A549 (cell line): ENCODE measurements at regions of chr3 and their contacts with region 1.

Region 1: DNA sequence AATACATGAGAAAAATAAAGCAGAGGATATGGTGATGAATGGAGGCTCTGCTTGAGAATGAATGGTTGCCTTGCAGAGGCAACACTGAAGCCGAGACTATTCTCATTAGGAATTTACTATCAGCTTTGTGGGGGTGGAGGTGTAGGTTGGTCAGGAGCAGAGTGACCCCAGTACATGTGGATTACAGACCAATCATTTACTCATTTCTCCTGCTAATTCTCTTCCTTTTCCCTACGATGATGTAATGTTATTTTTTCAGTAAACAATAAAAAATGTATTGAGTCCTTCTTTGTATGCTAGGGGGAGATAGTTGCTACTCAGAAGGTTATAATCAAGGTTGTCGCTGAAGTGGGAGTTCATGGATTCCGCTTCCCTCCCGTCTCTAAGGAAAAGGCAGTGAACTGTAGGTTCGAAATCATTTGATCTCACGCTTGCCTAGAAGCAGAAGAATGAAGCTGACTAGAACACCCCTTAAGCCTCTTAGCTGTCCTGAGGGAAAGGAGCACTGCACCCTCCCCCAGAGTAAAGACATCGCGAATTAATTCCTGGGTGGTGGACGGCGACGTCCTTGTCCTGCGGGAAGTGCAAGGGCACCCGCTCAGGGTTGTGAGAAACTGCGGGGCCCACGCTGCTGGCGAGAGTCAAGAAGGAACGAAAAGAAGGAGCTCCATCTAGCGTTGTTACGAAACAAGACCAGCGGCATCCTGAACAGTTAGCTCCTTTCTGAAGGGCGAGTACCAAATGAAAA is 213.2 kb upstream of the PFN2 start:
- DNase-seq: peak; percentile 60 to 83
- ATAC-seq: peak; percentile 98
- H3K4me3 ChIP-seq: peak overlapping the region; percentile 39
- H3K27ac ChIP-seq: peak overlapping the region; percentile 55 to 80
- H3K4me1 ChIP-seq: peaks cover 32% of the 10 kb centered on the region
- CTCF ChIP-seq: peak; percentile 89
- EP300 ChIP-seq: no peak
- POLR2A ChIP-seq: no peak
- RAD21 ChIP-seq: peak; percentile 93 to 95

Region 2: GRCh38 chr3:149765762-149766334 is 418.0 kb before region 1 on chr3:
- CTCF ChIA-PET with region 1: interaction called, 10 read pairs
- POLR2A ChIA-PET with region 1: no interaction called
- DNase-seq: peak in 1 of 2 experiments; percentile 48
- ATAC-seq: peak; percentile 55 to 81; a peak in 4 of 6 replicates
- H3K4me3 ChIP-seq: no peak overlapping the region
- H3K27ac ChIP-seq: no peak overlapping the region
- H3K4me1 ChIP-seq: 0 out of 3 replicates have a peak, but pooled peaks cover 2% of the 10 kb centered on the region
- CTCF ChIP-seq: peak; percentile 73
- EP300 ChIP-seq: no peak
- POLR2A ChIP-seq: no peak
- RAD21 ChIP-seq: peak; percentile 72 to 74

Region 3: GRCh38 chr3:149936812-149937233 is 247.0 kb before region 1 on chr3:
- CTCF ChIA-PET with region 1: interaction called, 12 read pairs
- POLR2A ChIA-PET with region 1: no interaction called
- DNase-seq: peak; percentile 33 to 56
- ATAC-seq: peak; percentile 90 to 94
- H3K4me3 ChIP-seq: no peak overlapping the region
- H3K27ac ChIP-seq: no peak overlapping the region
- H3K4me1 ChIP-seq: no peaks in the 10 kb centered on the region
- CTCF ChIP-seq: peak; percentile 80
- EP300 ChIP-seq: no peak
- POLR2A ChIP-seq: no peak
- RAD21 ChIP-seq: peak; percentile 80 to 90

Region 4: GRCh38 chr3:149969940-149970715 is 213.7 kb before region 1 on chr3:
- CTCF ChIA-PET with region 1: interaction called, 80 read pairs
- POLR2A ChIA-PET with region 1: interaction called, 43 read pairs
- DNase-seq: peak; percentile 29 to 88
- ATAC-seq: peak; percentile 60 to 73
- H3K4me3 ChIP-seq: peak overlapping the region; percentile 91
- H3K27ac ChIP-seq: peak overlapping the region; percentile 98 to 99
- H3K4me1 ChIP-seq: peaks cover 35% of the 10 kb centered on the region
- CTCF ChIP-seq: no peak
- EP300 ChIP-seq: no peak
- POLR2A ChIP-seq: no peak
- RAD21 ChIP-seq: no peak

Region 5: DNA sequence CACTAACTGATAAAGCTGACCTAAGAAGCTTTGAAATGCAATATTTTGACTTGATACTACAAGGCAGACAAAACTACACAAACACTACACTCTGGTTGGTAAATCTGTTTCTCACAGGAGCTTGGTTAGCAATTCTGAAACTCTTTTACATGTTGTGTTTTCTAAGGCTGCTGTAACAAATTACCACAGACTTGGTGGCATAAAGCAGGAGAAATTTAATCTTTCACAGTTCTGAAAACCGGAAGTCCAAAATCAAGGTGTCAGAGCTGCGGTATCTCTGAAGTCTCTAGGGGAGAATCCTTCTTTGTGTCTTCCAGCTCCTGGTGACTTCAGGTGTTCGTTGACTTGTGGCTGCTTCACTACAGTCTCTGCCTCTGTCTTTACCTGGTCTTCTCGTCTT is 200.2 kb before region 1 on chr3:
- CTCF ChIA-PET with region 1: interaction called, 10 read pairs
- POLR2A ChIA-PET with region 1: no interaction called
- DNase-seq: no peak
- ATAC-seq: no peak
- H3K4me3 ChIP-seq: no peak overlapping the region
- H3K27ac ChIP-seq: no peak overlapping the region
- H3K4me1 ChIP-seq: no peaks in the 10 kb centered on the region
- CTCF ChIP-seq: no peak
- EP300 ChIP-seq: no peak
- POLR2A ChIP-seq: no peak
- RAD21 ChIP-seq: no peak

Region 6: DNA sequence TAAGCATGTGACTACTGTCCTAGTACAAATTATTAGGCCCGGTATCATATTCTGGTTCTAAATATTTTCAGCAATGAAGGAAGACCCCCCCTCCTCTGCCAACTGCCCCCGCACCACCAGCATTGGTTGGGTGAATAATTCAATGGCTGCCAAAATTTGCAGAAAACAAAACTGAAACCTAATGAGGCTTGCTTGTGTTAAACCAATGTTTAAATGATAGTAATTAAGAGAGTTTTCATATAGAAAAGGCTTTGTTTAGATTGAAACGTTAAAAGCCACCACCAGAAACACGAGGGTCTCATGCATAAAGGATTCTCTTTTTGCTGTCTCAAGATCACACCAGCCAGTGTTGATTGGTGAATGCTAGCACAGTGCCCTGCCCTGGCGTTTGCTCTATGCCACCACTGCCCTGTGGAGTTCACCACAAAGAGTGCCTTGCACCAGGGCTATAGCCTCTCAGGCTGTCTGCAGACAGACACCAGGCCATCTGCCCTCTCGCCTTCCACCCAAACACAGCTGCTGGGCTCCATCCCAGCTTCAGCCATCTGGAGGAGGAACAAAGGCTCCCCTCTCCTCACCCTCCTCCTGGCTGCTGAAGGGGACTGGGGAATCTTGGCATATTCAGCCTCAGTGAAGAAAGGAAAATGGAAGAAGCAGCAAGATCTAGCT is 12.9 kb before region 1 on chr3:
- CTCF ChIA-PET with region 1: interaction called, 23 read pairs
- POLR2A ChIA-PET with region 1: no interaction called
- DNase-seq: no peak
- ATAC-seq: no peak
- H3K4me3 ChIP-seq: no peak overlapping the region
- H3K27ac ChIP-seq: no peak overlapping the region
- H3K4me1 ChIP-seq: peaks cover 9% of the 10 kb centered on the region; the same call in 1 of the 3 replicates
- CTCF ChIP-seq: no peak
- EP300 ChIP-seq: no peak
- POLR2A ChIP-seq: no peak
- RAD21 ChIP-seq: no peak

Region 7: GRCh38 chr3:150216041-150216811 is 32.4 kb after region 1 on chr3:
- CTCF ChIA-PET with region 1: interaction called, 10 read pairs
- POLR2A ChIA-PET with region 1: no interaction called
- DNase-seq: no peak
- ATAC-seq: no peak
- H3K4me3 ChIP-seq: no peak overlapping the region
- H3K27ac ChIP-seq: no peak overlapping the region
- H3K4me1 ChIP-seq: no peaks in the 10 kb centered on the region
- CTCF ChIP-seq: no peak
- EP300 ChIP-seq: no peak
- POLR2A ChIP-seq: no peak
- RAD21 ChIP-seq: no peak